Testis (tissue), 5 donors: ENCODE measurements at regions of chr15 and their contacts with region 1.

Region 1: GRCh38 chr15:43903864-43904290 is 77.1 kb downstream of the WDR76 start:
- DNase-seq: peak; percentile 79
- H3K4me3 ChIP-seq: no peak overlapping the region
- H3K27ac ChIP-seq: no peak overlapping the region
- H3K4me1 ChIP-seq: peaks cover 25% of the 10 kb centered on the region
- H3K27me3 ChIP-seq: no peaks in the 10 kb centered on the region
- CTCF ChIP-seq: peak; percentile 88 to 93 (median 89)
- POLR2A ChIP-seq: no peak

Region 2: DNA sequence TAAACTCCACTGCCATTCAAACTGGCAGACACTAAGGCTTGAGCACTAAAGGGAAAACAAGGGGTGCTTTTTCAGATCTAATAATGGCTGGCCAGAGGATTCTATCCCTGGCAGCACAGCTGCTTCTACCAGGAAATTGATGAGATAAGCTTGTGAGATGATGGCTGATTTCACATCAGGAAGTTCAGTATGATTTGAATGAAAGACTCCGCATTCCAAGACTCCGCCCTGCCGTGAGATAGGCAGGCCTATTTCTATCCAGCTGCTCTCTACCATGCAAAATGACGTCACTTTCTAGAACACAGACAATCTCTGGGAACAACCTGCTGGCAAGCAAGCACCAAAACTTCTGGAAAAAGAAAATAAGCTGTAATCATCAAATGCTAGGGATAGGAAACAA is 94.7 kb after region 1 on chr15:
- intact Hi-C with region 1: no loop called
- DNase-seq: peak; percentile 55
- H3K4me3 ChIP-seq: no peak overlapping the region
- H3K27ac ChIP-seq: peak overlapping the region in 1 of 2 donors; percentile 54
- H3K4me1 ChIP-seq: no peaks in the 10 kb centered on the region
- H3K27me3 ChIP-seq: no peaks in the 10 kb centered on the region
- CTCF ChIP-seq: no peak
- POLR2A ChIP-seq: no peak

Region 3: DNA sequence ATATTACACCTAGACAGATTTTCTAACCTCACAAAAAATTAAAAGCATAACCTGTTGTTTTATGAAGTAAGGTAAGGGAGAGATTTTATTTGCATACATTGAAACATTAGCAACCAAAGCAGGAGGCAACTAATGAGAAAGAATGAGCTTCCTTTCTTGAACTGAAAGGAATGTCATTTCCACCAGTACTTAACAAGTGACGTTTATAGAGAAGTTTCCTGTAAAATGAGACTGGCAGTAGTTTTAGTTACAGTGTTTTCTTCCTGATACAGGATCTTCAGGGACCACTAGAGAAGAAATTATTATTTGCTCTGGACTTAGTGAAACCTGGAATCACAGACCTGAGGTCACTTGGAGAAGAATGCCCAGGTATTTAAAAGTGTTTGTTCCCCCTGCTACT is 318.6 kb after region 1 on chr15:
- intact Hi-C with region 1: loop called (anchors 10 kb)
- DNase-seq: no peak
- H3K4me3 ChIP-seq: no peak overlapping the region
- H3K27ac ChIP-seq: no peak overlapping the region
- H3K4me1 ChIP-seq: no peaks in the 10 kb centered on the region
- H3K27me3 ChIP-seq: no peaks in the 10 kb centered on the region
- CTCF ChIP-seq: no peak
- POLR2A ChIP-seq: no peak